Heart left ventricle (tissue), 16 donors: ENCODE measurements at regions of chr4 and their contacts with region 1.

Region 1: GRCh38 chr4:96035727-96036126 is 195.8 kb downstream of the PDHA2 start:
- DNase-seq: no peak
- ATAC-seq: no peak
- H3K4me3 ChIP-seq: no peak overlapping the region
- H3K27ac ChIP-seq: no peak overlapping the region
- H3K4me1 ChIP-seq: no peaks in the 10 kb centered on the region
- H3K27me3 ChIP-seq: no peaks in the 10 kb centered on the region
- CTCF ChIP-seq: peak in 11 of 12 donors; percentile 9 to 56 (median 35)
- POLR2A ChIP-seq: no peak

Region 2: DNA sequence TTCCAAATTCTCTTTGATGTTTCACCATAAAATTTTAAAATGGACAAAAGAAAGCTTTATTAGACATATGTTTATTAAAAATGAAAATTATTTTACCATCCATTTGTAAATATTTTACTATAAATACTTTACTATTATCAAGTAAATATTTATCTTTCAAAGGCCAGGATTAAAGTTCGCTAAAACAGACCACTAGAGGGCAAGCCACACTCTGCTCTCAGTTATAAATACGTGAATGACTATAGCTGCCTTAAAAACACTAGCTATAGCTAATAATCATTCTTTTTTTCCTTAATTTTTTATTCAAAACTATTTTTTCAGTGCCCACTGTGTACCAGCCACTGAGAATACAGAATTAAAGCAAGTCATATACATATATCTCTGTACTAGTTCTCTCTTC is 525.6 kb before region 1 on chr4:
- intact Hi-C with region 1: loop called in 1 of 10 experiments (anchors 10 kb)
- DNase-seq: no peak
- ATAC-seq: no peak
- H3K4me3 ChIP-seq: no peak overlapping the region
- H3K27ac ChIP-seq: no peak overlapping the region
- H3K4me1 ChIP-seq: peaks cover 0 to 7% (median 0%) of the 10 kb centered on the region in 12 donors
- H3K27me3 ChIP-seq: no peaks in the 10 kb centered on the region
- CTCF ChIP-seq: peak; percentile 43 to 74 (median 57)
- POLR2A ChIP-seq: no peak